AG04449 (cell line): ENCODE measurements at regions of chr11 and their contacts with region 1.

Region 1: DNA sequence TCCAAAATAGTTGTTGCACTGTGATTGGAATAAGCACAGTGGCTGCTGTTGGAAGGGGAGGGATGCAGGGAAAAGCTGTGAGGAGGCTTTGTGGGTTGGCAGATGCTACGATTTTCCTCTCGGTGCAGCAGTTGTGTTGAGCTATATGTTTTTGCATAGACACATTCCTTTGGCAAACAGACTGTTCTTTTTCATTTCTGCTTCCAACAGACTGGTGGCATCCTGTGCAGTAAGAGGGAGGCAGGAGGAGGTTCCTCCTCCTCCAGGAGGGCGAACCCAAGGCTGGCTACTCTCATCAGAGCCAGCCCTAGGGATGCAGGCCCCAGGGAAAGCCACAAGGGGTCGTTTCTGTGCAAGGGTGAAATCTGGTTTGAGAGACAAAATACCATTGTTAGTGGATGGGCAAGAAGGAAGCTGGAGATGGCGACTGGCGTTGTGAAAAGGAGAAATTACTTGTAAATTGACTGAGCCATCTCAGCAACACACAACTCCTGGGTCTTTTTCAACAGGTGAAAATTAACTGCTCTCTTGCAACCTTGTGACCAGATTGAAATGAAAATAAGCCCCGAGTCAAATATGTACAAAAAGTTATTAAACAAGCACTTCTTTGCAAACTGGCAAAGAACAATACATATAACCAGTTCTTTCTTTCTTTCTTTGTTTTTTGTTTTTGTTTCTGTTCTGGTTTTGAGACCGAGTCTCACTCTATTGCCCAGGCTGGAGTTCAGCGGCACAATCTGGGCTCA is 26.5 kb upstream of the UBASH3B start:
- DNase-seq: no peak
- H3K4me3 ChIP-seq: no peak overlapping the region
- CTCF ChIP-seq: peak; percentile 89

Region 2: GRCh38 chr11:122505304-122506006 is 123.5 kb before region 1 on chr11:
- CTCF ChIA-PET with region 1: no interaction called
- POLR2A ChIA-PET with region 1: no interaction called
- DNase-seq: peak; percentile 91
- H3K4me3 ChIP-seq: no peak overlapping the region
- CTCF ChIP-seq: peak; percentile 86

Region 3: DNA sequence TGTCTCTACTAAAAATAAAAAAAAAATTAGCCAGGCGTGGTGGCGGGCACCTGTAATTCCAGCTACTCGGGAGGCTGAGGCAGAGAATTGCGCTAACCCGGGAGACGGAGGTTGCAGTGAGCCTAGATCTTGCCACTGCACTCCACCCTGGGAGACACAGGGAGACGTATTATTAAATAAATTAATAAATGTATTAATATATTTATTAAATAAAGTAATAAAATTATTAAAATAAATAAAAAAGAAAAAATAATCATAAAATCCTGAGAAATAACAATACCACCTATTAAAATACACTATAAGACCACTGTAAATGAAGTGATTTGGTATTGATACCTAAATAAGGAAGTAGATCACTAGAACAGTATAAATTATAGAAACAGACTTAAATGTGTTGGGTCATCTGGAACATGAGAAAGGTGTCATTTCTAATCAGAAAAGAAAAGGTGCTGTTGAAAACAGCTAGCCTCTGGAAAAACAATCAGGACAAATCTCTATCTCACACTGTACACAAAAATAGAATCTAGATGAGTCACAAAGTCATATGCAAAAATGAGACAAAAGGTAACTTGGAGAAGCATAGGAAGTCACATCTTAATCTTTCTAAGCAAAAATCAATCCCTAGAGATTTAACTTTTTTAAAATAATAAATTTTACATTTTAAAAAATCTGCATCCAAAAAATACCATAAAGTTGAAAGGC is 16.7 kb before region 1 on chr11:
- CTCF ChIA-PET with region 1: interaction called, 14 read pairs
- POLR2A ChIA-PET with region 1: no interaction called
- DNase-seq: no peak
- H3K4me3 ChIP-seq: no peak overlapping the region
- CTCF ChIP-seq: no peak

Region 4: GRCh38 chr11:122646549-122647340 is 17.8 kb after region 1 on chr11:
- CTCF ChIA-PET with region 1: interaction called, 16 read pairs
- POLR2A ChIA-PET with region 1: interaction called, 4 read pairs
- DNase-seq: no peak
- H3K4me3 ChIP-seq: no peak overlapping the region
- CTCF ChIP-seq: no peak

Region 5: GRCh38 chr11:122772945-122773344 is 144.0 kb after region 1 on chr11:
- CTCF ChIA-PET with region 1: interaction called, 645 read pairs
- POLR2A ChIA-PET with region 1: no interaction called
- DNase-seq: no peak
- H3K4me3 ChIP-seq: no peak overlapping the region
- CTCF ChIP-seq: no peak

Region 6: GRCh38 chr11:122796128-122796717 is 167.2 kb after region 1 on chr11:
- CTCF ChIA-PET with region 1: interaction called, 645 read pairs
- POLR2A ChIA-PET with region 1: no interaction called
- DNase-seq: no peak
- H3K4me3 ChIP-seq: no peak overlapping the region
- CTCF ChIP-seq: peak; percentile 87

Region 7: GRCh38 chr11:122837528-122838346 is 208.8 kb after region 1 on chr11:
- CTCF ChIA-PET with region 1: interaction called, 12 read pairs
- POLR2A ChIA-PET with region 1: no interaction called
- DNase-seq: no peak
- H3K4me3 ChIP-seq: no peak overlapping the region
- CTCF ChIP-seq: no peak

Region 8: DNA sequence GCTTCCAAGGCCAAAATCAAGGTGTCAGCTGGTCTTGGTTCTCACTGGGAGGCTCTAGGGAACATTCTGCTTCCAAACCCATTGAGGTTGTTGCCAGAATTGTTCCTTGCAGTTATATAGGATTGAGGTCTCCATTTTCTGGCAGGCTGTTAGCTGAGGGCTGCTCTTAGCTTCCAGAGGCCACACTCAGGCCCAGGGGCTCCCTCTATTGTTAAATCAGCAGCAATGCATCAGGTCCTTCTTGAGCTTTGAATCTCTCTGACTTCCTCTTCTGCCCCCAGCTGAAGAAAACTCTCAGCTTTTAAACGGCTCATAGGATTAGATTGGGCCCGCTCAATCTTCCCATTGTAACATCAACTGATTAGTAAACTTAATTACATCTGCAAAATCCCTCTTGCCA is 392.0 kb after region 1 on chr11:
- CTCF ChIA-PET with region 1: interaction called, 56 read pairs
- POLR2A ChIA-PET with region 1: no interaction called
- DNase-seq: no peak
- H3K4me3 ChIP-seq: no peak overlapping the region
- CTCF ChIP-seq: peak; percentile 76